Caco-2 (cell line): ENCODE measurements at regions of chr13 and their contacts with region 1.

Region 1: GRCh38 chr13:44435142-44435982 is 61.7 kb downstream of the SERP2 start:
- DNase-seq: peak; percentile 95 to 99
- H3K4me3 ChIP-seq: peak overlapping the region; percentile 91
- H3K4me3 Mint-ChIP-seq: peak overlapping the region; percentile 93
- H3K27ac Mint-ChIP-seq: peak overlapping the region; percentile 98
- H3K4me1 ChIP-seq: peaks cover 50% of the 10 kb centered on the region
- H3K4me1 Mint-ChIP-seq: peaks cover 48% of the 10 kb centered on the region
- H3K27me3 ChIP-seq: no peaks in the 10 kb centered on the region
- H3K27me3 Mint-ChIP-seq: no peaks in the 10 kb centered on the region
- CTCF ChIP-seq: no peak

Region 2: DNA sequence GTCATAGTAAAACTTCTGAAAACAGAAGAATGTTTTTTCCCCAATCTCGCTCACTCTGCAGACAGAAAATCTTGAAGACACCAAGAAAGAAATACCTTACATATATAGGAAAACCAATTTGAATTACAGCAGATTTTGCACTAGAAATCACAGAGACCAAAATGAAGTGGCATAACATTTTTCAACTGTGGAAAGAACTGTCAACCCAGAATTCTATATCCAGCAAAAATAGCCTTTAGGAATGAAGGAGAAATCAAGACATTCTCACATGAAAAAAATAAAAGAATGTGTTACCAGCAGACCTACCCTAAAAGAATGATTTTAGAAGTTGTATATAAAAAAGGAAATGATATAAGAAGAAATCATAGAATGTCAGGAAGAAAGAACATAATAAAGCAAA is 584.5 kb before region 1 on chr13:
- CTCF ChIA-PET with region 1: no interaction called
- POLR2A ChIA-PET with region 1: interaction called, 10 read pairs
- intact Hi-C with region 1: no loop called
- DNase-seq: no peak
- H3K4me3 ChIP-seq: no peak overlapping the region
- H3K4me3 Mint-ChIP-seq: no peak overlapping the region
- H3K27ac Mint-ChIP-seq: no peak overlapping the region
- H3K4me1 ChIP-seq: peaks cover 24% of the 10 kb centered on the region
- H3K4me1 Mint-ChIP-seq: peaks cover 12% of the 10 kb centered on the region
- H3K27me3 ChIP-seq: no peaks in the 10 kb centered on the region
- H3K27me3 Mint-ChIP-seq: no peaks in the 10 kb centered on the region
- CTCF ChIP-seq: no peak

Region 3: GRCh38 chr13:44108331-44108858 is 327.0 kb before region 1 on chr13:
- CTCF ChIA-PET with region 1: no interaction called
- POLR2A ChIA-PET with region 1: interaction called, 10 read pairs
- intact Hi-C with region 1: loop called (anchors 1 kb)
- DNase-seq: peak; percentile 89 to 91
- H3K4me3 ChIP-seq: no peak overlapping the region
- H3K4me3 Mint-ChIP-seq: peak overlapping the region; percentile 8
- H3K27ac Mint-ChIP-seq: peak overlapping the region; percentile 72
- H3K4me1 ChIP-seq: peaks cover 23% of the 10 kb centered on the region
- H3K4me1 Mint-ChIP-seq: peaks cover 30% of the 10 kb centered on the region
- H3K27me3 ChIP-seq: no peaks in the 10 kb centered on the region
- H3K27me3 Mint-ChIP-seq: no peaks in the 10 kb centered on the region
- CTCF ChIP-seq: no peak

Region 4: GRCh38 chr13:44212633-44213403 is 222.5 kb before region 1 on chr13:
- CTCF ChIA-PET with region 1: interaction called, 7 read pairs
- POLR2A ChIA-PET with region 1: interaction called, 3 read pairs
- intact Hi-C with region 1: loop called (anchors 1 kb)
- DNase-seq: peak; percentile 85 to 90
- H3K4me3 ChIP-seq: no peak overlapping the region
- H3K4me3 Mint-ChIP-seq: peak overlapping the region; percentile 47
- H3K27ac Mint-ChIP-seq: peak overlapping the region; percentile 97
- H3K4me1 ChIP-seq: peaks cover 18% of the 10 kb centered on the region
- H3K4me1 Mint-ChIP-seq: peaks cover 36% of the 10 kb centered on the region
- H3K27me3 ChIP-seq: no peaks in the 10 kb centered on the region
- H3K27me3 Mint-ChIP-seq: no peaks in the 10 kb centered on the region
- CTCF ChIP-seq: no peak

Region 5: DNA sequence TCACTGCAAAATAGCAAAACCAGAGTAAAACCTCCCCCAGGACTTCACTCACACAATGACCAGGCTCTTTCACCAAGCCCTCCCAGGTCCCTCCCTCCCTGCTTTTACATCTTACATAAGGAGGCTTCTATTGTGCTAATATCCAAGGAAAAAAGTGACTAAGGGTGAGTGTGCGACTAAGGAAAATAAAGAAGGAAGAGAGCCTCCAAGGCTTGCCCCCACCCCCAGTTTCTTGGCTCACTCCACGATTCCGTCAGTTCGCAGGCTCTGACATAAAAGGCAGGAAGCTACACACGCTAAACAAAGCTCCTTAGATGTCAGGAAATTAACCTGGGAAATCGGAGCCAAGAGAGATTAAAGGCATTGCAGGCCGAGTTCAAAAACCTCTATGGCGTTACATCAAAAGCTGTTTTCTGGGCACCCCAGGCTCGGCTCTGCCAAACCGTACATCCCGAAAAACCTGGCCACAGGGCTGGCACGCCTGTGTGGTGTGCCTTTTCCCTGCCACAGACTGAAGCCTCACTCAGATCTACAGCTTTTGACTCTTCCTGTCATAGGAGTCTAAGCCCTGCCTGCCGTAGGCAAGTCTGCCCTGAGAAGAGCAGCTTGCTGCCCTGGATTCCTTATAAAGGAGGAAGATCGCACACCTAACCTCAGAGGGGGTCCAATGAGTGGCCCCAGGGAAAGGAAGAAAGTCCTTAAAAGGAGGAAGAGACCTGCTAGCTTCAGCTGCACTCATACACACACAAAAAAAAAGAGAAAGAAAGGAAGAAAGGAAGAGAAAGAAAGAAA is 128.8 kb before region 1 on chr13:
- CTCF ChIA-PET with region 1: interaction called, 3 read pairs
- POLR2A ChIA-PET with region 1: interaction called, 3 read pairs
- intact Hi-C with region 1: loop called (anchors 2 kb)
- DNase-seq: no peak
- H3K4me3 ChIP-seq: no peak overlapping the region
- H3K4me3 Mint-ChIP-seq: no peak overlapping the region
- H3K27ac Mint-ChIP-seq: peak overlapping the region; percentile 55
- H3K4me1 ChIP-seq: peaks cover 6% of the 10 kb centered on the region; the same call in 1 of the 2 replicates
- H3K4me1 Mint-ChIP-seq: peaks cover 19% of the 10 kb centered on the region
- H3K27me3 ChIP-seq: no peaks in the 10 kb centered on the region
- H3K27me3 Mint-ChIP-seq: no peaks in the 10 kb centered on the region
- CTCF ChIP-seq: no peak

Region 6: GRCh38 chr13:44388427-44389059 is 46.8 kb before region 1 on chr13:
- CTCF ChIA-PET with region 1: interaction called, 3 read pairs
- POLR2A ChIA-PET with region 1: interaction called, 17 read pairs
- intact Hi-C with region 1: loop called (anchors 1 kb)
- DNase-seq: peak; percentile 51 to 68
- H3K4me3 ChIP-seq: no peak overlapping the region
- H3K4me3 Mint-ChIP-seq: no peak overlapping the region
- H3K27ac Mint-ChIP-seq: peak overlapping the region; percentile 76
- H3K4me1 ChIP-seq: peaks cover 56% of the 10 kb centered on the region
- H3K4me1 Mint-ChIP-seq: peaks cover 51% of the 10 kb centered on the region
- H3K27me3 ChIP-seq: no peaks in the 10 kb centered on the region
- H3K27me3 Mint-ChIP-seq: no peaks in the 10 kb centered on the region
- CTCF ChIP-seq: no peak

Region 7: GRCh38 chr13:44470638-44471562 is 35.5 kb after region 1 on chr13:
- CTCF ChIA-PET with region 1: interaction called, 4 read pairs
- POLR2A ChIA-PET with region 1: interaction called, 7 read pairs
- intact Hi-C with region 1: loop called (anchors 1 kb)
- DNase-seq: peak in 1 of 2 experiments; percentile 39
- H3K4me3 ChIP-seq: no peak overlapping the region
- H3K4me3 Mint-ChIP-seq: no peak overlapping the region
- H3K27ac Mint-ChIP-seq: no peak overlapping the region
- H3K4me1 ChIP-seq: peaks cover 19% of the 10 kb centered on the region
- H3K4me1 Mint-ChIP-seq: peaks cover 15% of the 10 kb centered on the region
- H3K27me3 ChIP-seq: no peaks in the 10 kb centered on the region
- H3K27me3 Mint-ChIP-seq: no peaks in the 10 kb centered on the region
- CTCF ChIP-seq: peak; percentile 55 to 66

Region 8: DNA sequence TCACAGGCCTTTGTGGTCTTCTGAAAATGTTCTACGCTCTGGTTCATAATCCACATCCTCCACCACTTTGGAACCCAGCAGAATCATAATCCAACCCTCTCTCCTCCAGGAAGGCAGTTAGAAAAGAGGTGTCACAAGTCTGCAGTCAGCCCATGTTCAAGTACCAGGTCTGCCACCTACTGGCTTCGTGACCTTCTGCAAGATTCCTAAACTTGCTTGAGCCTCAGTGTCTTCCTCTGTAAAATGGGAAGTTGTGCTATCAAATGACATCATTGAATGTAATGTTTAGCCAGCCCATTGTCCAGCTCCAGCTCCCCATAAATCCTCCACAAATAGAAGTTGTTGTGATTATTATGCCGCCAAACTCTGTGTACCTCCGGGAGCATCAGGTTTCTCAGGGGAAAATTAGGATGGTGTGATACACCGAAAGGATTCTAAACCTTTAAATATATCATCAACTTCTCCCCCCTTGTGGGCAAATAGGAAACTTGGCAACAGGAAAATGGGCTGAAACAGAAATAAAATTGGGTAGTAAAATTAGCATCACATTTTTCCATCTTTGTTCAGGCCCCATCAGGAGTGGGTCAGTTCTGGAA is 444.2 kb after region 1 on chr13:
- CTCF ChIA-PET with region 1: no interaction called
- POLR2A ChIA-PET with region 1: no interaction called
- intact Hi-C with region 1: no loop called
- DNase-seq: peak; percentile 39 to 52
- H3K4me3 ChIP-seq: no peak overlapping the region
- H3K4me3 Mint-ChIP-seq: no peak overlapping the region
- H3K27ac Mint-ChIP-seq: no peak overlapping the region
- H3K4me1 ChIP-seq: no peaks in the 10 kb centered on the region
- H3K4me1 Mint-ChIP-seq: no peaks in the 10 kb centered on the region
- H3K27me3 ChIP-seq: no peaks in the 10 kb centered on the region
- H3K27me3 Mint-ChIP-seq: no peaks in the 10 kb centered on the region
- CTCF ChIP-seq: peak; percentile 47 to 48